Caco-2 (cell line): ENCODE measurements at regions of chr12 and their contacts with region 1.

Region 1: GRCh38 chr12:14810953-14811483 is 3.0 kb downstream of the SMCO3 start:
- DNase-seq: peak; percentile 63 to 70
- H3K4me3 ChIP-seq: no peak overlapping the region
- H3K4me3 Mint-ChIP-seq: no peak overlapping the region
- H3K27ac Mint-ChIP-seq: no peak overlapping the region
- H3K4me1 ChIP-seq: no peaks in the 10 kb centered on the region
- H3K4me1 Mint-ChIP-seq: no peaks in the 10 kb centered on the region
- H3K27me3 ChIP-seq: no peaks in the 10 kb centered on the region
- H3K27me3 Mint-ChIP-seq: peaks cover 7% of the 10 kb centered on the region
- CTCF ChIP-seq: peak; percentile 65 to 85

Region 2: GRCh38 chr12:14892726-14893505 is 81.9 kb after region 1 on chr12:
- CTCF ChIA-PET with region 1: interaction called, 5 read pairs
- POLR2A ChIA-PET with region 1: no interaction called
- intact Hi-C with region 1: loop called (anchors 2 kb)
- DNase-seq: peak in 1 of 2 experiments; percentile 18
- H3K4me3 ChIP-seq: no peak overlapping the region
- H3K4me3 Mint-ChIP-seq: no peak overlapping the region
- H3K27ac Mint-ChIP-seq: no peak overlapping the region
- H3K4me1 ChIP-seq: no peaks in the 10 kb centered on the region
- H3K4me1 Mint-ChIP-seq: no peaks in the 10 kb centered on the region
- H3K27me3 ChIP-seq: no peaks in the 10 kb centered on the region
- H3K27me3 Mint-ChIP-seq: peaks cover 7% of the 10 kb centered on the region
- CTCF ChIP-seq: peak in 1 of 2 experiments; percentile 19

Region 3: GRCh38 chr12:14928969-14929368 is 118.0 kb after region 1 on chr12:
- CTCF ChIA-PET with region 1: no interaction called
- POLR2A ChIA-PET with region 1: no interaction called
- intact Hi-C with region 1: loop called (anchors 1 kb)
- DNase-seq: peak; percentile 72 to 87
- H3K4me3 ChIP-seq: no peak overlapping the region
- H3K4me3 Mint-ChIP-seq: peak overlapping the region; percentile 71
- H3K27ac Mint-ChIP-seq: peak overlapping the region; percentile 51
- H3K4me1 ChIP-seq: peaks cover 51% of the 10 kb centered on the region
- H3K4me1 Mint-ChIP-seq: peaks cover 37% of the 10 kb centered on the region
- H3K27me3 ChIP-seq: no peaks in the 10 kb centered on the region
- H3K27me3 Mint-ChIP-seq: no peaks in the 10 kb centered on the region
- CTCF ChIP-seq: no peak

Region 4: GRCh38 chr12:14948672-14949071 is 137.7 kb after region 1 on chr12:
- CTCF ChIA-PET with region 1: no interaction called
- POLR2A ChIA-PET with region 1: no interaction called
- intact Hi-C with region 1: no loop called
- DNase-seq: no peak
- H3K4me3 ChIP-seq: no peak overlapping the region
- H3K4me3 Mint-ChIP-seq: no peak overlapping the region
- H3K27ac Mint-ChIP-seq: peak overlapping the region; percentile 52
- H3K4me1 ChIP-seq: peaks cover 55% of the 10 kb centered on the region
- H3K4me1 Mint-ChIP-seq: peaks cover 41% of the 10 kb centered on the region
- H3K27me3 ChIP-seq: no peaks in the 10 kb centered on the region
- H3K27me3 Mint-ChIP-seq: no peaks in the 10 kb centered on the region
- CTCF ChIP-seq: no peak

Region 5: GRCh38 chr12:14986449-14986848 is 175.4 kb after region 1 on chr12:
- CTCF ChIA-PET with region 1: interaction called, 7 read pairs
- POLR2A ChIA-PET with region 1: no interaction called
- intact Hi-C with region 1: loop called (anchors 2 kb)
- DNase-seq: no peak
- H3K4me3 ChIP-seq: no peak overlapping the region
- H3K4me3 Mint-ChIP-seq: no peak overlapping the region
- H3K27ac Mint-ChIP-seq: no peak overlapping the region
- H3K4me1 ChIP-seq: no peaks in the 10 kb centered on the region
- H3K4me1 Mint-ChIP-seq: no peaks in the 10 kb centered on the region
- H3K27me3 ChIP-seq: no peaks in the 10 kb centered on the region; the same call in 1 of the 2 replicates
- H3K27me3 Mint-ChIP-seq: peaks cover 11% of the 10 kb centered on the region
- CTCF ChIP-seq: peak in 1 of 2 experiments; percentile 25

Region 6: GRCh38 chr12:14995583-14996425 is 184.8 kb after region 1 on chr12:
- CTCF ChIA-PET with region 1: interaction called, 38 read pairs
- POLR2A ChIA-PET with region 1: no interaction called
- intact Hi-C with region 1: loop called (anchors 1 kb)
- DNase-seq: peak in 1 of 2 experiments; percentile 46
- H3K4me3 ChIP-seq: no peak overlapping the region
- H3K4me3 Mint-ChIP-seq: no peak overlapping the region
- H3K27ac Mint-ChIP-seq: no peak overlapping the region
- H3K4me1 ChIP-seq: 0 out of 2 replicates have a peak, but pooled peaks cover 4% of the 10 kb centered on the region
- H3K4me1 Mint-ChIP-seq: peaks cover 7% of the 10 kb centered on the region
- H3K27me3 ChIP-seq: no peaks in the 10 kb centered on the region
- H3K27me3 Mint-ChIP-seq: peaks cover 14% of the 10 kb centered on the region
- CTCF ChIP-seq: peak; percentile 69 to 74

Region 7: DNA sequence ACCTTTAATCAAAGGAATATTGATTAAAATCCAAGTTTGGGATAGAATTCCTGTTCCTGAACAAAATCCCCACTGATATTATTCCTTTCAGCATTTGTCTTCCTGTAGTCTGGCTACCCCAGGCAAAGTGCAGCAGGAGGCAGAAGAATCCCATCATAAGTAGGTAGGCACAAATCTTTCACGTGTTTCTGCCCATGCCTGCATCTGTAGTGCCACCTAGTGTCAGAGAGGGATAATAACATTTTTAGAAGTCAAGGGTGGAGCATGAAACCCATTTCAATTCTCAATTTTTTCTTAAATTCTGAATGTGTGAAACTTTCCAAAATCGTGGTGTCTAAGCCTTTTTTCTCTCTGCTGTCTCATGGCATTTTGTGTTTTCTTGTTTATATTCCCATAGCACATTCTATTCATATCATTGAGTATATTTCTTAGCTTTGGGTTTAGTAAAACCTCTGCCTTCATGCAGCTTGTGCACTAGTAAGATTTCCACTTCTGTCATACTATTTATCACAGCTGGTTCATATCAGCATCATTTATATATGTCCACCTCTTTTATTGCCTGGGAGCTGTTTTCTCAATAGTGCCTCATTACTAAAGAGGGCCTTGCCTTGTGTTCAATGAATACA is 458.0 kb after region 1 on chr12:
- CTCF ChIA-PET with region 1: no interaction called
- POLR2A ChIA-PET with region 1: no interaction called
- intact Hi-C with region 1: loop called (anchors 1 kb)
- DNase-seq: peak; percentile 71 to 72
- H3K4me3 ChIP-seq: no peak overlapping the region
- H3K4me3 Mint-ChIP-seq: no peak overlapping the region
- H3K27ac Mint-ChIP-seq: no peak overlapping the region
- H3K4me1 ChIP-seq: no peaks in the 10 kb centered on the region
- H3K4me1 Mint-ChIP-seq: no peaks in the 10 kb centered on the region
- H3K27me3 ChIP-seq: no peaks in the 10 kb centered on the region
- H3K27me3 Mint-ChIP-seq: no peaks in the 10 kb centered on the region
- CTCF ChIP-seq: peak; percentile 87 to 96